ENCODE measurements at regions of chr14 and their contacts with region 1.

Region 1: DNA sequence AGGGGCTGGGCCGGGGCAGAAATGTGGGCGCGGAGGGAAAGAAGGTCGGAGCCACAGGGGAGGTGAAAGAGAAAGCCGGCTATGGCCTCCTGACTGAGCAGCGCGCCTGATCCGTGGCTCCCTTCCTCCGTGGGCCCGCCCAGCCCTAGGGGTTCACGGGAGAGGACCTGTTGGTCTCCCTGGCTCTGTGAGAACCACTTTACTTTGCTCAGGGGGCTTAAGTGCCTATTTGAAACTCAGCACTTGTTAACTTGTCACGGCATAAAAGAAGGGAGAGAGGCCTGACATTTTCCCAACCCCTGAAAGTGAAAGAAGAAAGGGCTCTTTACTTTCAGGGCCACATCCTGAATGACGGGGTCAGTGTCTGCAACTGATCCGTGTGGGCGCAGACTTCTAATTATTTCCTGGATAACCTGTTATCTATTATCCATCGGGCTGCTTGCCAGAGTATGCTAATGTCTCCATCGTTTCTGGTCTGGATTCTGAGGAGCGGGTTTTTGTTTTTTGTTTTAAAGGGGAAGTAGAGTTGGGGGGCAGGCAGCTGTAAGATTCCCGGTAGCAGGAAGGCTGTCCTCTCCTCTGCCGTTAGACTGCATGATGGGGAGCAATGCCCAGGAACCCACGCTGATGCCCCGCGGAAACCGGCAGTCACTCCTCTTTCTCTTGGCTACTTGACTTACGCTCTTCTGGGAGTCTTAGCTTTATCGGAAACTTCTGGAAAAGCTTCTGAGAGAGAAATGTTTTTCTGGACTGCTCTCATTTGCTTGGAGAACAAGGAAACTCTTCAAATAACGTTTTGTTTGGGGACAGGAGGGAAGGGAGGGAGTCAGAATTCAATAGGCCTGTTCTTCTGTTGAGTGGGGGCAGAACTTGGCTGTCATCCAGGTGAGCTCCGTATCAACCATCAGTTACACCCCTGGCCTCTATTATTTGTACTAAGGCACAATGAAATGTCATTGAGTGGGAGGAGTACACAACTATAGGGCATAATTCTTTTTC is 127.7 kb upstream of the MAX start:
- DNase-seq: peak; percentile 59
- ATAC-seq: peak; percentile 50
- H3K4me3 ChIP-seq: peak overlapping the region; percentile 36 to 60 (median 58)
- H3K4me3 Mint-ChIP-seq: peak overlapping the region; percentile 90
- H3K27ac ChIP-seq: peak overlapping the region; percentile 74 to 83
- H3K27ac Mint-ChIP-seq: peak overlapping the region; percentile 95
- H3K4me1 ChIP-seq: peaks cover 63 to 71% of the 10 kb centered on the region in 2 donors
- H3K4me1 Mint-ChIP-seq: peaks cover 58% of the 10 kb centered on the region
- H3K27me3 ChIP-seq: no peaks in the 10 kb centered on the region
- H3K27me3 Mint-ChIP-seq: no peaks in the 10 kb centered on the region
- CTCF ChIP-seq: no peak

Region 2: GRCh38 chr14:65102441-65103149 is 127.5 kb before region 1 on chr14 and contains the start of gene MAX:
- CTCF ChIA-PET with region 1: no interaction called
- POLR2A ChIA-PET with region 1: no interaction called
- intact Hi-C with region 1: loop called (anchors 5 kb)
- DNase-seq: peak; percentile 98
- ATAC-seq: peak; percentile 85
- H3K4me3 ChIP-seq: peak within 1 kb of the TSS; percentile 62 to 97 (median 93)
- H3K4me3 Mint-ChIP-seq: peak within 1 kb of the TSS; percentile 91
- H3K27ac ChIP-seq: peak within 1 kb of the TSS; percentile 95 to 97
- H3K27ac Mint-ChIP-seq: peak within 1 kb of the TSS; percentile 97
- H3K4me1 ChIP-seq: peaks cover 23 to 30% of the 10 kb centered on the region in 2 donors
- H3K4me1 Mint-ChIP-seq: peaks cover 38% of the 10 kb centered on the region
- H3K27me3 ChIP-seq: no peaks in the 10 kb centered on the region
- H3K27me3 Mint-ChIP-seq: no peaks in the 10 kb centered on the region
- CTCF ChIP-seq: no peak
- total RNA-seq, gene MAX: 127 and 130 TPM in 2 replicates

Region 3: GRCh38 chr14:65179918-65180724 is 49.9 kb before region 1 on chr14:
- CTCF ChIA-PET with region 1: no interaction called
- POLR2A ChIA-PET with region 1: no interaction called
- intact Hi-C with region 1: loop called (anchors 1 kb)
- DNase-seq: peak; percentile 79
- ATAC-seq: peak; percentile 93
- H3K4me3 ChIP-seq: peak overlapping the region in 1 of 5 experiments; percentile 15
- H3K4me3 Mint-ChIP-seq: peak overlapping the region; percentile 55
- H3K27ac ChIP-seq: peak overlapping the region in 1 of 2 donors; percentile 72
- H3K27ac Mint-ChIP-seq: peak overlapping the region; percentile 76
- H3K4me1 ChIP-seq: peaks cover 14 to 15% of the 10 kb centered on the region in 2 donors
- H3K4me1 Mint-ChIP-seq: peaks cover 29% of the 10 kb centered on the region
- H3K27me3 ChIP-seq: no peaks in the 10 kb centered on the region
- H3K27me3 Mint-ChIP-seq: no peaks in the 10 kb centered on the region
- CTCF ChIP-seq: no peak

Region 4: DNA sequence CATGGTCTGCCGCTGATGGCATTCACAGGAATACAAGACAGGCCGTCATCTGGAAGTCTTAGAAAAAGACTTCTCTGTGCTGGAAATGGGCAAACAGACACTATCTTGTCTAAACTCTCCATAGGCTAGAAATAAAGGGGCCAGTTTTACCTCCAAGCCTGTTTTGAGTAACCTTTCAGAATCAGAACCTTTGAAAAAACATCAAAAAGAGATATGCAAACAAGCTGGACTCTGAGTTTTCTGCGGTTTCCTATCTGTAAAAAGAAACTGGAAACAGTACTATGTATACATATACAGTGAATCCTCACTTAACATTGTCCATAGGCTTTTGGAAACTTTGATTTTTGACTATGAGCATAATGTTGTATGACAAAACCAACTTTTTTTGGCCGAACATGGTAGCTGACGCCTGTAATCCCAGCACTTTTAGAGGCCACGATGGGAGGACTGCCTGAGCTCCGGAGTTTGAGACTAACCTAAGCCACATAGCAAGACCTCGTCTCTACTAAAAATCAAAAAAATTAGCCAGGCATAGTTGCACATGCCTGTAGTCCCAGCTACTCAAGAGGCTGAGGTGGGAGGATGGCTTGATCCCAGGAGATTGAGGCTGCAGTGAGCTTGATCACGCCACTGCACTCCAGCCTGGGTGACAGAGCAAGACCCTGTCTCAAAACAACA is 34.9 kb before region 1 on chr14:
- CTCF ChIA-PET with region 1: interaction called, 3 read pairs
- POLR2A ChIA-PET with region 1: no interaction called
- intact Hi-C with region 1: loop called (anchors 5 kb)
- DNase-seq: peak; percentile 36
- ATAC-seq: peak; percentile 76
- H3K4me3 ChIP-seq: peak overlapping the region in 4 of 5 experiments; percentile 0 to 42 (median 28)
- H3K4me3 Mint-ChIP-seq: peak overlapping the region; percentile 84
- H3K27ac ChIP-seq: peak overlapping the region; percentile 29 to 35
- H3K27ac Mint-ChIP-seq: peak overlapping the region; percentile 91
- H3K4me1 ChIP-seq: peaks cover 19 to 23% of the 10 kb centered on the region in 2 donors
- H3K4me1 Mint-ChIP-seq: peaks cover 44% of the 10 kb centered on the region
- H3K27me3 ChIP-seq: no peaks in the 10 kb centered on the region
- H3K27me3 Mint-ChIP-seq: no peaks in the 10 kb centered on the region
- CTCF ChIP-seq: no peak

Measured in B cell (primary cell).